Left cardiac atrium (tissue), 4 donors: ENCODE measurements at regions of chr2 and their contacts with region 1.

Region 1: GRCh38 chr2:66434679-66435548 is at the start of gene MEIS1:
- DNase-seq: peak; percentile 92
- ATAC-seq: peak; percentile 87 to 89
- total RNA-seq, gene MEIS1: 32.4 to 36.1 TPM

Region 2: DNA sequence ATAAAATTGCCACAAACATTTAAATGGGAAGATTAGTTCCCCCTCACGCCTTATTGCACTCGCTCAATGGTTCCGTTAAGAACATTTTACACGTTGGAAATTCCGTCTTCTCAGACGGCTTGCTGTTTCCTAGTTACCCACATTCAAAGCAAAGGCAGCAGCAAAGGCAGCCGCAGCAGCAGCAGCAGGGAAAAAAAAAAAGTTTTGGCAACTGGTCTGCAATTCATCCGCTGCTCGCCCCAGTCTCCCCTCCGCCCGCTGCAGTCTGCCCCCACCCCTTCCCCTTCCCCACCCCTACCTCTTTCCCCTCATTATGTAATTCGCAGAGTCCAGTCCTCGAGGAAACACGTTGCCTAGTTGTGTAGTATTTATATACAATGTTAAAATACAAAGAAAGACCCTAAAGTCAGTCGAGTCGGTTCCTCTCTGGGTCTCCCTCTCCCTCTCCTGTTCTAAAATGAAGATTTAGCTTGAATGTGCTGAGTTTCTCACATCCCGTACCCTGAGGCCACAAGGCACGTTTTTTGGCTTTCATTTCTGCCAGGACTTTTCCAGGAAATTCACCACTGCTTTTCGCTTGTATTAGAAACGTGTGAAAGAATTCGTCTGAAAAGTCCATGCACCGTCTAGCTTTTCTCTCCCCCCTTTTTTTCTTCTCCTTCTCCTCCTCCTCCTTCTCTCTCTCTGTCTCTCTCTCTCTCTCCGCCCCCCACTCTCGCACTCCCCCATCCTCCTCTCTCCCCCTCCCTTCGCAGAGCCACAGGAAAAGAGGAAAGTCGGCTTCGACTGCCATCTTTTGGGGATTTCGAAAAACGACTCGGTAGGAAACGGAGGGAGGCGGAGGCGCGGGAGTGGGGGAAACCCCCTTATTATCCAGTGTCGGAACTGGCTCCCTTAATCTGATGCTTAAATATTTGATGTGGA is 140.0 kb after region 1 on chr2:
- intact Hi-C with region 1: loop called in 1 of 2 experiments (anchors 5 kb)
- DNase-seq: peak; percentile 57
- ATAC-seq: peak; percentile 78

Region 3: GRCh38 chr2:68031542-68032160 is 1596.7 kb after region 1 on chr2:
- intact Hi-C with region 1: loop called in 1 of 2 experiments (anchors 10 kb)
- DNase-seq: no peak
- ATAC-seq: no peak